Right ventricle myocardium inferior (tissue), 1 donor: ENCODE measurements at regions of chr12 and their contacts with region 1.

Region 1: DNA sequence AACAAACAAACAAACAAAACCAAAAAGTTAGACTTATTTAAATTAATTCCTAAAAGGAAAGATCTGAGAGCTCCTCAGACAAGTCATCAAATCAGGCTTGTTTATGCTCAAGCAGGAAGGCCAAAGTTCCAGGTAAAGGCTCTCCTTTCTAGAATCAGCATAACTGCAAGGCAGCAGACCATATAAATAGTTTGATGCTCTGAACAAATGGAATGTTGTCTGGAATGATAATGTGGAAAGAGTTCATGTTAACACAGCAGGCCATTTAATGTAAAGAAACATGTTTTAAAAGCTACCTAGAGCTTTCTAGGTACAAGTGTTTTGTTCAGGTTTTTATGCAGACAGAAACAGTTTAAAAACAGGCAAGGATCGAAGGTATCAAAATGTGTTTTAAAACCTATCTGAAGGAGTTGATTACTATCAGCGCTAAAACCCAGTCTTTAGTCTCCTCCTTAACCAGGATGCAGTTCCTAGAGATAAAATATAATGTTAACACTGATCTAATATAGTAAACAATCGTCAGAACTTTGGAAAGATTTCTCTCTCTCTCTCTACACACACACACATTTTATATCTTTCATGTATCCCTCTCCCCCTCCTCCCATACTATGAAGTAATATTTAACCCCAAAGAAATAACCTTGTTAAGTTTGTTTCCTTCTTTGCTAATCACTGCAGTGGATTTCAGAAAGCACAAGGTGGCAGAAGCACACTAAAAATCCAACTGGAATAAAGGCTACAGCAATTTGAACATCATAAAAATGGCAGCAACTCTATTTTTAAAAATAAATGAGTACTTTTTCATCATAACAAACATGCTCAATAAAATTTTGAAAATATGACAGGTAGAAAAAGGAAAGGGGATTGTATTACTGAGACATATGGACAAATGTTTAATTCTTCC is 135.5 kb downstream of the PAWR start:
- DNase-seq: no peak
- ATAC-seq: peak; percentile 66

Region 2: DNA sequence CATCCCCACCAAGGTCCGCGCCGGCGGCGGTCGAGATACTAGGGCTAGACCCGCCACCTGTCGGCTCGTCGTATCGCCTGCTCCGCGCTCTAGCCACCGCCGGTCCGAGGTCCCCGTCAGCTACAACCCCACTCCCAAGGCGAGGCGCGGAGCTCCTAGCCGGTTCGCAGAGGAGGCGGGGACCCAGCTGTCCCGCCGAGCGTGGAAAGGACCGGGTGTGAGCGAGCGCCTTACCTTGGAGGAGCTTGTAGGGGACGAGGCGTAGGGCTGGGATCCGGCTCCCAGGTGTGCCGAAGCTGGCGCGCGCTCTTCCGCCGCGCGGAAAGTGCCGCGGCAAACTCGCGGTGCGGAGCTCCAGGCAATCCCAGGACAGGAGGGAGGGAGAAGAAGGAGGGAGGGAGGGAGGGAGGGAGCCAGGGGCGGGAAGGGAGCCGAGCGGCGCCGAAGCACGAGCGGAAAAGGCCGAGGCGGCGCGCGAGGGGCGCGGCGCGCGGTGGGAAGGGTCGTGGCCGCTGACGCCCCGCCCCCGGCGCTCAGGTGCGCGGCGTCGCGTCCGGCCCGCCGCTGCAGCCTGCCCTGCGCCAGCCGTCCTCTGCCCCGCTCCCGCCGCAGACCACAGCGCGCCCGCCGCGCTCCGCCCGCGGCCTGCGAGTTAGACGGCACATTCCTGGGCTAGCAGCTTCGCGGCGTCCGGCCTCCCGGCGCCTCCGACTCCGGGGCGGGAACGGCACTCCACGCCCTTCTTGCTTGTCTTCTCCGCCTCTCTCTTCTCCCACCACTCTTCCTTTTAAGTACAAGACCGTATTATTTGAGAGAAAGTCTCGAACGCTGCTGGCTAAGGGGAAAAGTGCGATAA is 135.6 kb after region 1 on chr12 and contains the start of gene PAWR:
- intact Hi-C with region 1: loop called (anchors 2 kb)
- DNase-seq: peak; percentile 78
- ATAC-seq: peak; percentile 78
- total RNA-seq, gene PAWR: 11.8 TPM

Region 3: DNA sequence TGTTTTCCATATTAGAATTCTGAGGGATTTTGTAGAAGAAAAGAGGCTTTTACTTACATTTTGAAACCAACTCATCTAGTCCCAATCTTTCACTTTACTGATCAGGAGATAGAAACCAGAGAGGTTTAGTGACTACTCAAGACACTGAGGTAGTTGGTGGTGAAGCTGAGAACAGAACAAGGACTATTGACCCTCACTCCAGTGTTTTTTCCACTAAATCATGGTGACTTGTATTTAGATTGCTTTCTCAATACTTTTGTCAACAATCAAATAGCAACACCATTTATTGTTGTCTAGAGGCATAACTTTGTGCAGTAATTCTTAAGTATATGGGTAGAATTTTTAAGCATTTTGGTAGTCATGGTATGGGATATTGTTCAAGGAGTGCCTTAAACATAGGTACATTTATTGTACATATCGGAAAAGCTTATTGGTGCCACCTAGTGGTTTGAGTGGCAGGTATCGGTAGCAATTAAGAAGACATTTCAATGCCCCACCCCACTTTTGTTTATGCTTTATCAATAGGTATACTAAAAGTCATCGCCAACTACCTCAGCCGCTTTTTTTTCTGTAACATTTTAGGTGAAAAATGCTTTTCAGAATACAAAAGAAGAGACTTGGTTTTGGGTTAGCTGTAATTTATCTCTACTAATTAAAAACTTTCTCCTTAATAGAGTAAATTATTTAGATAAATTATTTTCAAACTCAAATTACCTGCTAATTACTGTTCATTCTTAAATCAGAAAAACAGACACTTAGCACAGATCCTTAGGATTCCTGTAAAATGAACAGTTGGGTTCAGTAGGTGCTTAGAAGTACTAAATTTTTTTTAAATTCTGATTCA is 182.8 kb after region 1 on chr12:
- intact Hi-C with region 1: loop called (anchors 2 kb)
- DNase-seq: no peak
- ATAC-seq: no peak

Region 4: DNA sequence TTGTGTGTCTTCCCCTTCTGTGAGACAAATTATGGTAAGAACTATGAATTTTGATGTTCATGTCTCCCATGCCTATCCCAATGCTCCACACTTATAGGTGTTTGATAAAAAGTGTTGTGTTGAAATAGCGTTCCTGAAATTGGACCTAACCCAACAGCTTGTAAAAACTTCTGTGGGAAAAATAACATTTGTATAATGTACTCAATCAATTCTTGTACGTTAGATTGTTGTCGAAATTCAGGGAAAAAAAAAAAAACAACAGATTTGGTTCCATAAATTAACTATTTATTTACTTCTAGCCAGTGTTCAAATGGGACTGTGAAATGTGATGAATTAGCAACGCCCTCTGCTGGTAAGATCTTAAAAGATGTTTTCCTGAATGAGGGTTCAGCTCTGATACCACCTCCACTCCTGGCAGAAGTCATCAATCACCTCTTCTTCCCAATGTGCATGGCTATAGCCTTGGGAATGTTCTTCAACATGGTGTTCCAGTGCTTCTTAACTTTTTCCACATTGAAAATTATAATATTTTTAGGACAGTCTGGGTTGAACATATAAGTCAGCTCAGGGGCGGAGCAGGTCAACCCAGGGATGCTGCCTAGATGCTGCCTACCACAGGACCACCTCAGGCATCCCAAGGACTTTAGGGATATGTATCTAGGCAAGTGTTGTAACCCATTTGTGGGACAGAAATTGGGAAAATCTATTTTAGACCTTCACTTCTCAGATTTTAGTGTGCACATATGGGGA is 714.7 kb after region 1 on chr12:
- intact Hi-C with region 1: loop called (anchors 5 kb)
- DNase-seq: no peak
- ATAC-seq: peak; percentile 46